ENCODE measurements at regions of chr7 and their contacts with region 1.

Region 1: GRCh38 chr7:105703207-105703930 is 122.1 kb upstream of the EFCAB10 start:
- DNase-seq: no peak
- ATAC-seq: no peak
- H3K4me3 ChIP-seq: no peak overlapping the region
- H3K27ac ChIP-seq: no peak overlapping the region
- H3K4me1 ChIP-seq: peaks cover 4% of the 10 kb centered on the region; the same call in 1 of the 2 replicates
- H3K27me3 ChIP-seq: no peaks in the 10 kb centered on the region
- CTCF ChIP-seq: no peak

Region 2: DNA sequence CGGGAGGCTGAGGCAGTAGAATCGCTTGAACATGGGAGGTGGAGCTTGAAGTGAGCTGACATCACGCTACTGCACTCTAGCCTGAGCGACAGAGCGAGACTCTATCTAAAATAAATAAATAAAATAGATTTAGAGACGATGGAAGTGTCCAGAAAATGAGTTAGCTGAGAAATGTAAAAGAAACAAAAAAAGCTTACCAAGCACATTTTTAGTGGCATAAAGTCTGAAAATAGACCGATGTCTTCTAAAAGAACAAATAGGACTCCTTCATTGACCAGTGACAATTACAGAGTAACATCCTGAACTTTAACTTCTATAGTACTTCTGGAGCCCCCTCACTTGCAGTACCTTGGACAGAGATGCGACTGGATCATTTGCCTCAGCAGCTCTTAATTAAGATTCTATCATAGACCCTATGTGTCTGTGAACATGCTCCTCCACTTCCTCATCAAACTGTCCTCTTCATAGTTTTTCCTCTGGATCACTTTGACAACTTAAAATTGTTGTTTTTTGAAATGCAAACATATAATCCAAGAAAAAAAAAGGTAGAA is 289.4 kb before region 1 on chr7:
- CTCF ChIA-PET with region 1: no interaction called
- POLR2A ChIA-PET with region 1: no interaction called
- intact Hi-C with region 1: no loop called
- DNase-seq: no peak
- ATAC-seq: no peak
- H3K4me3 ChIP-seq: no peak overlapping the region
- H3K27ac ChIP-seq: no peak overlapping the region
- H3K4me1 ChIP-seq: no peaks in the 10 kb centered on the region
- H3K27me3 ChIP-seq: no peaks in the 10 kb centered on the region
- CTCF ChIP-seq: no peak

Region 3: GRCh38 chr7:105589356-105590077 is 113.9 kb before region 1 on chr7:
- CTCF ChIA-PET with region 1: no interaction called
- POLR2A ChIA-PET with region 1: no interaction called
- intact Hi-C with region 1: no loop called
- DNase-seq: peak; percentile 92
- ATAC-seq: peak; percentile 99
- H3K4me3 ChIP-seq: no peak overlapping the region
- H3K27ac ChIP-seq: no peak overlapping the region
- H3K4me1 ChIP-seq: no peaks in the 10 kb centered on the region
- H3K27me3 ChIP-seq: no peaks in the 10 kb centered on the region
- CTCF ChIP-seq: peak; percentile 95

Region 4: GRCh38 chr7:105673367-105674142 is 29.8 kb before region 1 on chr7:
- CTCF ChIA-PET with region 1: no interaction called
- POLR2A ChIA-PET with region 1: no interaction called
- intact Hi-C with region 1: no loop called
- DNase-seq: peak; percentile 33
- ATAC-seq: no peak
- H3K4me3 ChIP-seq: no peak overlapping the region
- H3K27ac ChIP-seq: no peak overlapping the region
- H3K4me1 ChIP-seq: peaks cover 10% of the 10 kb centered on the region
- H3K27me3 ChIP-seq: no peaks in the 10 kb centered on the region
- CTCF ChIP-seq: no peak

Region 5: DNA sequence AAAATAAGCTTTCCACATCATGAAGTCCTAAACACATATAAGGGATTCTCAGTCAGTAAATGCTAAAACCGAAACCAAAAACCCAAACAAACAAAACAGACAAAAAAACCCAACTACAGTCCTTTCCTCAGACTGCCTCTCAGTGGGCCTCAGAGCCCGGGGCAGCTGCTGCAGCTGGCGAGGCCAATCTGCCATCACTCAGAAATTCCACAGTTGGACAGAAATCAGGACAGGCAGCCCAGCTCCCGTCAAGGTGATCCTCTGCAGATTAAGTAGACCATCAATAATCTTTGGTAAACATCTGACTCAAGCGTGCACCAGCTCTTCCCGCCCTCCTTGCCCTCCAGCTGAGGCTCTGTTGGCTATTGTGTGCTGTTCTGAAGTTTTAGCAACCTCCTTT is 30.9 kb after region 1 on chr7:
- CTCF ChIA-PET with region 1: interaction called, 18 read pairs
- POLR2A ChIA-PET with region 1: no interaction called
- intact Hi-C with region 1: no loop called
- DNase-seq: peak; percentile 89
- ATAC-seq: peak; percentile 99
- H3K4me3 ChIP-seq: no peak overlapping the region
- H3K27ac ChIP-seq: no peak overlapping the region
- H3K4me1 ChIP-seq: peaks cover 13% of the 10 kb centered on the region
- H3K27me3 ChIP-seq: no peaks in the 10 kb centered on the region
- CTCF ChIP-seq: no peak

Region 6: DNA sequence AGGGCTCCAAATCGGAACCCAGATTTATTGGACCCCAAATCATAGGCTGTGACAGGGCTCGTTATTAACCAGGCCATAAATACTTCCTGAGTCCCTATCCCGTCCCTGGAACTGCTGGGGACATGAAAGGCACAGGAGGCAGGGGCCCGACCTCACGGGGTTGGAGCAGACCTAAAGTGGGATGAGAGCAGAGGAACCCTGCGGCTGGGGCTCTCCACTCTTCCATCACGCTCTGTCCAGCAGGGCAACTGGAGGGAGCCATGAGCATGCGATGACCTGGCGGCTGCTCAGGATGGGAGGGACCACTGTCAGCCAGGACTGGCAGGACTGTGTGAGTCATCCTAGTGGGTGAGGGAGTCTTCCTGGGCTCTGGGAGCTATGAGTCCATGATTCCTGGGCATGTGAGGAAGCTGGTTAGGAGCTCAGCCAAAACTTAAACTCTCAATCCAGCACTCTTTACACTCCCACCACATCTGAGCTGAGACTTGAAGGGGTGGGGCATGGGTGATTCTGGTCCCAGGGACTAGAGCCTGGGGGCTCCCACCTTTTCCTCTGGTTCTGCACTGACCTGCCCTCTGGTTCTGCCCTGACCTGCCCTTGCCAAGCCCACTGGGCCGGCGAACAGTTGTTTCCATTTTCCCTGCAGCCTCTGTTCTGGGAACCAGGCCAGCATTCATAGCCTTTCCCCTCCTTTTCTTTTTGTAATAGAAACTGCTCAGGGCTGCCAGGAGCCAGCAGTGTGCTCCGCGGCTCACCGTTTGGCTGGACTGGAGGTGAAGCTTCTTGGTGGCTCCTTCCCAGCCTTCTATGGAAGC is 361.6 kb after region 1 on chr7:
- CTCF ChIA-PET with region 1: interaction called, 10 read pairs
- POLR2A ChIA-PET with region 1: no interaction called
- intact Hi-C with region 1: no loop called
- DNase-seq: peak; percentile 99
- ATAC-seq: peak; percentile 86
- H3K4me3 ChIP-seq: peak overlapping the region; percentile 71
- H3K27ac ChIP-seq: peak overlapping the region; percentile 94
- H3K4me1 ChIP-seq: peaks cover 63% of the 10 kb centered on the region
- H3K27me3 ChIP-seq: no peaks in the 10 kb centered on the region
- CTCF ChIP-seq: no peak

Measured in PC-3 (cell line).